Ascending aorta (tissue), 2 donors: ENCODE measurements at regions of chr14 and their contacts with region 1.

Region 1: DNA sequence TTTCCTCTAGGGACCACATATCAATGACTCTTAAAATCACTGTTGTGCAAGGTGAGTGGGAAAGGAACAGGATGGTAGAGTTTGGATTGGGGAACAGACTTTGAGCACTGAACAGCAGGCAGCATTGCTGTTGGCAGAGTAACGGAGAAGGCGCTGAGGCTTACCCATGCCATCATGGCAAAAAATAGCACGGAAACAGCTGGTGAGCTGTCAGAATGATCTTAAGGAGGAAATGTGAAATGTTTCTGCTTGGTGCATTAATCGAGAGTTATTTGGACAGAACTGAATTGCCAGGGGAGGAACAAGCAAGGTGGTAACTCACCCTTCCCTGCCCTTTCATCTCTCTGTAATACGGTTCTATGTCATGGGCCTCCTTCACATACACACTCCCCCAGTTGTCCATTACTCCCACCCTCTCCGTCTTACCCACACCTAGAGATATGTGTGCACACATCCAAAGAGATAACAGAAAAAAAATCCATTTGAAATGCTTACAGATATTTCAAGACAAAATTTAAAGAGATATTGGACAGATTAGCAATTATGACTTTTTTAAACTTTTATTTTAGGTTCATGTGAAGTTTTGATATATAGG is 572.5 kb downstream of the DIO2 start:
- DNase-seq: no peak
- H3K4me3 ChIP-seq: no peak overlapping the region
- H3K27ac ChIP-seq: no peak overlapping the region
- H3K4me1 ChIP-seq: no peaks in the 10 kb centered on the region
- H3K27me3 ChIP-seq: no peaks in the 10 kb centered on the region
- CTCF ChIP-seq: no peak

Region 2: GRCh38 chr14:79242666-79243065 is 396.1 kb before region 1 on chr14:
- intact Hi-C with region 1: no loop called
- DNase-seq: no peak
- H3K4me3 ChIP-seq: no peak overlapping the region
- H3K27ac ChIP-seq: no peak overlapping the region
- H3K4me1 ChIP-seq: no peaks in the 10 kb centered on the region
- H3K27me3 ChIP-seq: no peaks in the 10 kb centered on the region
- CTCF ChIP-seq: no peak

Region 3: GRCh38 chr14:79649856-79650255 is 11.1 kb after region 1 on chr14:
- intact Hi-C with region 1: loop called (anchors 1 kb)
- DNase-seq: no peak
- H3K4me3 ChIP-seq: no peak overlapping the region
- H3K27ac ChIP-seq: no peak overlapping the region
- H3K4me1 ChIP-seq: no peaks in the 10 kb centered on the region
- H3K27me3 ChIP-seq: no peaks in the 10 kb centered on the region
- CTCF ChIP-seq: no peak

Region 4: GRCh38 chr14:79881299-79881698 is 242.5 kb after region 1 on chr14:
- intact Hi-C with region 1: no loop called
- DNase-seq: no peak
- H3K4me3 ChIP-seq: no peak overlapping the region
- H3K27ac ChIP-seq: no peak overlapping the region
- H3K4me1 ChIP-seq: no peaks in the 10 kb centered on the region
- H3K27me3 ChIP-seq: no peaks in the 10 kb centered on the region
- CTCF ChIP-seq: no peak